GM10248 (cell line): ENCODE measurements at regions of chr6 and their contacts with region 1.

Region 1: DNA sequence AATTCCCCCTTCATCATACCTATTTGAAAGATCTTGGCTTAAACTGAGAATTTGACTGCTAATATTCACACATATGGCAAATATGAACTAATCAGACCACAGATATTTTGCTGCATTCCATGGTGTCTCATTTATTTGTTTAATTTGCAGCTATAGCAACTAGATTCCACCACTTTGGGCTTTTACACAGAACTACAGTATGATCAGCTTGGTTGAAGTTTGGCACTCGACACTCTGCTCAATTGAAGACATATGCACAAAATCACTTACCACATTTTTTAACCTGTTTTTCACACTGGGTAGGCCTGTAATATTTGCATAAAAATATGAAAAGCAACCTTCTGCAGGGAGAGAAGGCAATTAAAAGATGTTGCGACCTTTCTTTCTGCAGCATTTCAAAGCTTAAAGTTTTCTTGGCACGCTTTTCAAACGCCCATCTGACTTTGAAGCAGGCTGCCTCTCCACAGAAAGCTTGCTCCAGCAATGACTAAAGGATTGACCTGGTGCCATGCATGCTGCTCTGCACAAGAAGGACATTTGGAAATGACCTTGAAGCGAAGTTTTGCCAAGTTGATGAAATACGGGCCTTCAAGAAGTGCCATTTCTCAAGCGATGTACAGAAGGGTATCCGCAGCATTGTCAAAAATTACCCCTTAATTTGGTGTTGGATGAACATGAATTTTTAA is 126.7 kb downstream of the AIG1 start:
- DNase-seq: no peak
- CTCF ChIP-seq: no peak

Region 2: GRCh38 chr6:143200167-143200770 is 12.9 kb after region 1 on chr6:
- CTCF ChIA-PET with region 1: interaction called, 13 read pairs
- POLR2A ChIA-PET with region 1: no interaction called
- DNase-seq: no peak
- CTCF ChIP-seq: no peak

Region 3: DNA sequence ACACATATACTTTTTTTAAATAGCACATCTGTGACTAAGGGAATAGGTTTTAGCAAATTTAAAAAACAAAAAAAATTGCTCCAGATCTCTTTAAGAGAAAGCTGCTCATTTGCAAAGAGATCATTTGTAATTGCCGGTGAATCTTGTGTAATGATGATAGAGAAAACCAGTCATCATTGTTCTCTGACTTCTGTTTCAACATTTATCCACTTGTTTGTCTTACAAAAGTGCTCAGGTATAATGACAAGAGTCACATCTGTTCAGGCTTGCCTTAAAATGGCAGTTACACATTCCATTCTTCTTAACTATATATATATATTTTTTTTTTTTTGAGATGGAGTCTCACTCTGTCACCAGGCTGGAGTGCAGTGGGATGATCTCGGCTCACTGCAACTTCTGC is 38.5 kb after region 1 on chr6:
- CTCF ChIA-PET with region 1: no interaction called
- POLR2A ChIA-PET with region 1: no interaction called
- DNase-seq: no peak
- CTCF ChIP-seq: no peak

Region 4: DNA sequence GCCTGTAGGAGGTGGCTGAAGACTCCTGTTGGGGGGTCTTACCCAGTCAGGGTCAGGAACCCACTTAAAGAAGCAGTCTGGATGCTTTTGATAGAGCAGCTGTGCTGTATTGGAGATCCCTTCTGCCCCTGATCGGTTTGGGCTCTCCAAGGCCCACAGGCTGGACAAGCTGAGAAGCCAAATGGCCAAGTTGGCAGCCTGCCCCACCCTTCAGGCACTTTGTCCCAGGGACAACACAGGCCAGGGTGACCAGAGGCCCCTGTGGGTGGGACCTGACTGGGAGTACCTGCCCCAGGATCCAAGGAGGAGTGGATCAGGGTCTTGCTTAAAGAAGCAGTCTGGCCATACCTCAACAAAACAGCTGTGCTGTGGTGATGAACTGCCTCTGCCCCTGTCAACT is 725.3 kb after region 1 on chr6:
- CTCF ChIA-PET with region 1: no interaction called
- POLR2A ChIA-PET with region 1: no interaction called
- DNase-seq: no peak
- CTCF ChIP-seq: no peak